Activated T-helper 2 cell treated with anti-CD3 and anti-CD28 coated beads, Interferon-gamma antibody, Interleukin-2, Interleukin-4, amounts not matched to agents 10 μg/mL and 5 μg/mL and 100 μg/mL, durations not matched to agents 14 hours and 24 hours and 36 hours (primary cell): ENCODE measurements at regions of chr1 and their contacts with region 1.

Region 1: DNA sequence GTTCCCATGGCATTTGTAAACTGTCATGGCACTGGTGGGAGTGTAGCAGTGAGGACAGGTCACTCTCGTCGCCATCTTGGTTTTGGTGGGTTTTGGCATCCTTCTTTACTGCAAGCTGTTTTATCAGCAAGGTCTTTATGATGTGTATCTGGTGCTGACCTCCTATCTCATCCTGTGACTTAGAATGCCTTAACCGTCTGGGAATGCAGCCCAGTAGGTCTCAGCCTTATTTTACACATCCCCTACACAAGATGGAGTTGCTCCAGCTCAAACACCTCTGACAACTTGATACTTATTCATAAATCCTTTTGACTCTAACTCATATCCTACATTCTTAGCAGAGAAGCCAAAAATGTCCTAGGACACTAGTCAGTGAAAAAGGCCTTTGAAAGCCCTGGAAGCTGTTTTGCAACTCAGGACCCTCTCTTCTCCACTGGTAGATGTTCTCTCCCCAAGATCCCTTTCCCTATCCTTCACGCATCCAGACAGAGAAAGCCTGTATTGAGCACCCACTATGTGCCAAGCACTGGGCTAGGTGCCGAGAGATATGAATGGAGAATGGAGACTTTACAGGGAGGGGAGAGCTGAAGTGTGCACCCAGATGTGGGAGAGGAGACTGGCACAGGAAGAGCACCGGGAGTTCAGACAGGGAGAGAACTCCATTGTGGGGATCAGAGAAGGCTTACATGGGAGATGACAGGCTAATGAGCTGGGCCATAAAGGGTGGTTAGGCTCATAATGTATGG is 6.7 kb upstream of the CSRP1 start:
- DNase-seq: no peak
- H3K4me3 Mint-ChIP-seq: no peak overlapping the region
- H3K27ac Mint-ChIP-seq: no peak overlapping the region
- H3K4me1 Mint-ChIP-seq: peaks cover 19% of the 10 kb centered on the region
- H3K27me3 Mint-ChIP-seq: no peaks in the 10 kb centered on the region

Region 2: DNA sequence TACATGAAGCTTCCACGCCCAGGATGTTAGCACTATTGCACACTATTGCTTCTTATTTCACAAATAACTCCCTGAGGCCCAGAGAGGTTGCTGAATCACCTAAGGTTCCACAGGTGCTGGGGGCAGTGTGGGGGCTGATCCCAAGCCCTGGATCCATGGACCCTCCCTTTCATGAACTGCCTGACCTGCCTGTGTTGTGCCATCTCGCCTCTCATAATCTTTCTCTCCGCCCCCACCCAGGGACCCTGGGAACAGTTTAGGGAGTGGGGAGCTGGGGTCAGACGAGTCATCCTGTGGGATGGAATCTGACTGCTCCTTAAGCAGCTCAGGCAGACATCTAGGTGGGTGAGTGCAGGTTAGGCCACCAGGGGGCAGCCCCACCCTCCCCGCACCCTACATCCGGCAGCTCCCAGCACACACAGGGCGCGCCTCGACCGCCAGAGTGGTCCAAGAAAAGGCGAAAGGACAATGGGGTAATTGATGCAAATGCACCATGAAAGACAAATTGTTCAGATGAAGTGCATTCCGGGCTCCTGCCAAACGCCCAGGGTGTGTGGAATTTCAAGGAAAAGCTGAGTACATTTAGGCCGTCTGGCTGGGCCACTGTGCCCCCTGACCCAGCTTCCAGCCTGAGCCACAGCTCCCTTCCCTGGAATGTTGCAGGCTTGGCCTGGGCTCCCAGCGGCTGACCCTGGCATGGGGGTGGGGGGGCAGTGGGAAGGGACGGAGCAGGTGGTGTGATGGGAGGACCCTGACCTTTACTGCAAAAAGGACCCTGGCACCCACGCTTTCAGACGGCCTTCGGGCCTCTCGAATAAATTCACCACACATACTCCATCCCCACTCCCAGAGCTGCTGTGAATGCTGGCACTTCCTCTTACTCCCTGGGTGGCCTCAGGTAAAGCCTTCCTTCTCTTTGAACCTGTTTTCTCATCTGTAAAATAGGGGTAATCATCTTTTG is 65.5 kb before region 1 on chr1:
- intact Hi-C with region 1: loop called (anchors 1 kb)
- DNase-seq: peak; percentile 45
- H3K4me3 Mint-ChIP-seq: no peak overlapping the region
- H3K27ac Mint-ChIP-seq: no peak overlapping the region
- H3K4me1 Mint-ChIP-seq: peaks cover 20% of the 10 kb centered on the region
- H3K27me3 Mint-ChIP-seq: peaks cover 7% of the 10 kb centered on the region